Activated T-helper 1 cell treated with anti-CD3 and anti-CD28 coated beads, Interleukin-12 subunit alpha, Interleukin-12 subunit beta, Interleukin-2, Interleukin-4 antibody, amounts not matched to agents 30 ng/mL and 10 ng/mL and 1 ng/mL, durations not matched to agents 14 hours and 24 hours and 36 hours (primary cell): ENCODE measurements at regions of chr7 and their contacts with region 1.

Region 1: DNA sequence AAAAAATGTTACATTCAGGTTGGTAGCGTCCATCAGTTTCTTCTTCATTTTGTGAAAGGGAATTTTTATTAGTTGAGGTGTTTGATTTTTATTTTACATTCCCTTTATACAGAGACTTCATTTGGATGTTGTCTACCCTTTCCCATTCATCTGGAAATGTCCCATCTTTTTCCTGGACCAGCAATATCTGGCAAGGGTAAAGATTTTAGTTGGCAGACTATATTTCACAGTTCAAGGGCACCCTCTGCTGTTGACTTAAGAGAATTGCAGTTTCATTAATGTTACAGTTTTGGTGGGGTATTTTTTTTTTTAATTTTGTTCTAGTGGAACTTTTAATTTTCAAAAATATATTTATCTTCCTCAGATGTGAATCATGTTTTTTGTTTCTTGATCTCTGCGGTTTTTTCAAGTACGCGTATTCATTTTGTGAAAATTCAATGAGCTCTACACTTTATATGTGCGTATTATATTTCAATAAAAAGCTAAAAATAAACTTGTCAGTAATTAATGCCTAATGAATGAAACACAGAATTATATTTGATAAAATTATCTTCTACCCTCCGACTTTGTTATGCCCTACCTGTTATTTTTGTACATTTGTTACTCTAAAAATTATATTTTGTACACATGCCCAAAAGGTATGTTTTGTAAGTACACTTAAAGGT is 97.9 kb upstream of the KLF14 start:
- DNase-seq: no peak
- H3K4me3 Mint-ChIP-seq: no peak overlapping the region
- H3K27ac Mint-ChIP-seq: no peak overlapping the region
- H3K4me1 Mint-ChIP-seq: no peaks in the 10 kb centered on the region
- H3K27me3 Mint-ChIP-seq: peaks cover 11% of the 10 kb centered on the region

Region 2: DNA sequence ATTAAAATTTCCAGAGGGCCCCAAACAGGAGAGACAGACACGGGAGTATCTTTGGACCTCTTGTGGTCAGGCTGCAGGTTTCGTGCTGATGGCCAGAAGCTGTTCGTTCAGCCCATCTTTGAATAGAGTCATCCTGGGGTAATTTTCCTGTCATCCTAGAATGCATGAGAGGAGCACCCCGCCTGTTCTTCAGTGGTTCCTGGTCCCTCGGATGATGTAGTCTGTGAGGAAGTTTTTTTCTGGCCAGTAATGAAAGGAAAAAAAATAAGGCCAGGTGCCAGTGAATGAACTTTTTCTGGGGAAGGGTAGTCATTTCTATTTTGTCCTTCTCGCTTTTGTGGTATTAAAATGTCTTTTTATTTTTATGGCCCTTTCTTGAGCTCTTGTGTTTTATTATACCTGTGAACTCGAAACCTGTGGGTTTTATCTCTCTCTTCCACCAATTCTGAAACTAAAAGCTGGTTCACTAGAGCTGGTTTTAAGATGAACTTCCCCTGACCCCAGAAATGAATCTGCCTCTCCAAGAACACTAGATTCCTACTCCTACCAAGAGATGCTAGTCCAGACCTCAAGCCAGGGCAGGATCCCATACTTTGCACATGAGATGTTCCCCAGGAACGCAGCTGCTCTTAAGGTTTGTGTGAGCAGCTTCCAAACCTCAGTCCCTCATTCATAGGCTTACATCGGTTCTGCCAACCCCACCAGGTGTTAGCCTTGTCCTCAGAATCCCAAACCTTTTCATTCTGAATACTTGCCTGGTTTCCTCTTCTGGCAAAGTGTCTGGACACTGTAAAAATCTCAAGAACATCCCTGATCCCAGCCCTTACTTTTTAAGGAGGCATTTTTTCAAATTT is 355.4 kb before region 1 on chr7:
- intact Hi-C with region 1: no loop called
- DNase-seq: no peak
- H3K4me3 Mint-ChIP-seq: no peak overlapping the region
- H3K27ac Mint-ChIP-seq: no peak overlapping the region
- H3K4me1 Mint-ChIP-seq: no peaks in the 10 kb centered on the region
- H3K27me3 Mint-ChIP-seq: peaks cover 6% of the 10 kb centered on the region

Region 3: GRCh38 chr7:130758429-130759056 is 73.4 kb before region 1 on chr7:
- intact Hi-C with region 1: loop called (anchors 1 kb)
- DNase-seq: no peak
- H3K4me3 Mint-ChIP-seq: no peak overlapping the region
- H3K27ac Mint-ChIP-seq: no peak overlapping the region
- H3K4me1 Mint-ChIP-seq: no peaks in the 10 kb centered on the region
- H3K27me3 Mint-ChIP-seq: peaks cover 13% of the 10 kb centered on the region

Region 4: DNA sequence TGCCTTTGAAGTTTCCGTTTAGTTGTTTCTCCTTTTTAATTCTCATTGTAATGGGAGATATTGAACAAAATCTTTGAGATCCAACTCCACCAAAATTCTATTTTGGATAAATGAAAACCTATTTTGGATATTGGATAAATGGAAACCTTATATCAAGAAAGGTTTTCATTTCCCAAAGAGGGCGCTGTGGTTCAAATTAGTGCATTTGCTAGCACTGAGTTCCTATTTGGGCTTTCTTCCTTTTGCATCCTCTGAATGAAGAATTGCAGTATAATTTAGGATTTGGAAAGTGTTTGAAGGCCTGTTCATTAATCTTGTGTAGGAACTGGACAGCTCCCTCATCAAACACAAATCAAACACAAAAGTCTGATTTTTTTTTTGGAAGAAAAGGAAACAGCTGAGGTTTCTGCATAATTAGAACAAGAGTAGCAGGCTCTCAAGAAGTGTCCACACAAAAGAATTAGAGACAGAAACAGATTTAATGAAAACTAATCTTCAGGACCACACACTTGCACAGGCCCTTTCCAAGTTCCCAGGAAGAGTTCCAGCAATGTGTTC is 17.1 kb before region 1 on chr7:
- intact Hi-C with region 1: no loop called
- DNase-seq: no peak
- H3K4me3 Mint-ChIP-seq: no peak overlapping the region
- H3K27ac Mint-ChIP-seq: no peak overlapping the region
- H3K4me1 Mint-ChIP-seq: no peaks in the 10 kb centered on the region
- H3K27me3 Mint-ChIP-seq: peaks cover 7% of the 10 kb centered on the region